IMR-90 (cell line): ENCODE measurements at regions of chr1 and their contacts with region 1.

Region 1: DNA sequence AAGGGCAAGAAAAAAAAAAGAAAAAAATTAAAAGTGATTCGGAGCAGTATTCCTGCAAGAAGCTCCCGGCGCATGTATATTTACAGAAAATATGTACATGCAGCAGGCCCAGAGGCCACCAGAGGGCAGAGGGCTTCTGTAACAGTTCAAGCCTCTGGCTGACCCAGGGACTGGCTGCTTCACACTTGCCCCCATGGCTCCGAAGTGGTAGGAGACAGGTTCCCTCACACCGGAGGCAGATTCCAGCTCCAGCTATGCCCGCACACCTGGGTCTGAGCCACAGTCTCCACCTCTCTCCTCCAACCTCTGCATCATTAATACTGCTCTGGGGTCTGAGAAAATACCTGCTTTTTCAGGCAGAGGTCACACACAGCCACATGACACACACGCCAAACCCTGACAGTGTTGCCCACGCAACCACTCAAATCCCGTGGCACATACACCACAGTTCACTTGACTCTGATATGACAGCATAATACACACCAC is 2.2 kb upstream of the ARHGAP30 start:
- DNase-seq: no peak
- ATAC-seq: peak; percentile 63; the same call in 1 of the 2 replicates
- H3K4me3 ChIP-seq: no peak overlapping the region
- H3K27ac ChIP-seq: no peak overlapping the region
- H3K4me1 ChIP-seq: no peaks in the 10 kb centered on the region
- H3K27me3 ChIP-seq: no peaks in the 10 kb centered on the region; the same call in 1 of the 2 replicates
- CTCF ChIP-seq: peak; percentile 50
- POLR2A ChIP-seq: no peak
- RAD21 ChIP-seq: peak; percentile 62

Region 2: DNA sequence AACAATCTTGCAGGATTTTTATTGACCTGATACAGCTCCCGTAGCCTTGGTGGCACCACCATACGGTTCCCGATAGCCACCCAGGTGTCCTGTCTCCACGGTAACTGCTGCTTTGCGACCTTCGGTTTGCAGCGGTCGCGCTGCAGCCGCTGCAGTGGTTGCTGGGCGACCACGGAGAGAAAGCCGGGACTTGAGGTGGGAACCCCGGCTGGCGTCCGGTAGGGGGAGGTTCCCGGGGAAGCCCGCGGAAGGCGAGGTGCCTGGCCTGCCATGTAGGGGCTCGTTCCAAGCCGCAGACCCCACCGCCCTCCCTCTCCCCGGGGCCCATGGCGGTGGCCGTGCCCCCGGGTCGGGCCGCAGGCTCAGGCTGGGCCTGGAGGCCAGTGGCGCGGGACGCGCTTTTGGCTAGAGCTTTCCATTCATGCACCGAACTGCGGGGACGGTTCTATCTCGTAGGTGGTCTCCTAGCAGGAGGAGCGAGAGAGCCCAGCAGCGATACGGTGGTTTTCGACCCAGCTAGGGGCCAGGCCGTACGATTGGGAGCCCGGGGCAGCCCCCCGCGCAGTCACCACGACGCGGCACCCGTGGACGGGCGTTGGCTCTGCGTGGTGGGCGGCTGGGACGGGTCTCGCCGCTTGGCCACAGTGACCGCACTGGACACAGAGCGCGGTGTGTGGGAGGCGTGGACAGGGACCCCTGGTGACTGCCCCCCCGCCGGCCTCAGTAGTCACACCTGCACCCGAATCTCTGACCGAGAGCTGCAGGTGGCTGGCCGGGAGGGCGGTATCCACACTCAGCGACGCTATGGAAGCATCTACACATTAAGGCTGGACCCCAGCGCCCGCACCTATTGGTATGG is 26.5 kb after region 1 on chr1 and contains the start of gene KLHDC9:
- CTCF ChIA-PET with region 1: interaction called, 7 read pairs
- POLR2A ChIA-PET with region 1: no interaction called
- dilution Hi-C with region 1: no loop called
- in situ Hi-C with region 1: no loop called
- intact Hi-C with region 1: loop called (anchors 2 kb)
- DNase-seq: peak; percentile 54
- ATAC-seq: peak; percentile 73
- H3K4me3 ChIP-seq: peak within 1 kb of the TSS; percentile 43
- H3K27ac ChIP-seq: no peak within 1 kb of the TSS
- H3K4me1 ChIP-seq: peaks cover 5% of the 10 kb centered on the region; the same call in 1 of the 2 replicates
- H3K27me3 ChIP-seq: no peaks in the 10 kb centered on the region
- CTCF ChIP-seq: no peak
- POLR2A ChIP-seq: no peak
- RAD21 ChIP-seq: no peak
- total RNA-seq, gene KLHDC9: 0.18 TPM in 1 of 2 replicates, not detected in the other

Region 3: GRCh38 chr1:161139765-161140164 is 67.8 kb after region 1 on chr1:
- CTCF ChIA-PET with region 1: no interaction called
- POLR2A ChIA-PET with region 1: no interaction called
- dilution Hi-C with region 1: no loop called
- in situ Hi-C with region 1: no loop called
- intact Hi-C with region 1: no loop called
- DNase-seq: peak; percentile 57
- ATAC-seq: peak; percentile 60
- H3K4me3 ChIP-seq: no peak overlapping the region
- H3K27ac ChIP-seq: no peak overlapping the region
- H3K4me1 ChIP-seq: no peaks in the 10 kb centered on the region
- H3K27me3 ChIP-seq: no peaks in the 10 kb centered on the region
- CTCF ChIP-seq: peak; percentile 64
- POLR2A ChIP-seq: no peak
- RAD21 ChIP-seq: peak; percentile 66

Region 4: DNA sequence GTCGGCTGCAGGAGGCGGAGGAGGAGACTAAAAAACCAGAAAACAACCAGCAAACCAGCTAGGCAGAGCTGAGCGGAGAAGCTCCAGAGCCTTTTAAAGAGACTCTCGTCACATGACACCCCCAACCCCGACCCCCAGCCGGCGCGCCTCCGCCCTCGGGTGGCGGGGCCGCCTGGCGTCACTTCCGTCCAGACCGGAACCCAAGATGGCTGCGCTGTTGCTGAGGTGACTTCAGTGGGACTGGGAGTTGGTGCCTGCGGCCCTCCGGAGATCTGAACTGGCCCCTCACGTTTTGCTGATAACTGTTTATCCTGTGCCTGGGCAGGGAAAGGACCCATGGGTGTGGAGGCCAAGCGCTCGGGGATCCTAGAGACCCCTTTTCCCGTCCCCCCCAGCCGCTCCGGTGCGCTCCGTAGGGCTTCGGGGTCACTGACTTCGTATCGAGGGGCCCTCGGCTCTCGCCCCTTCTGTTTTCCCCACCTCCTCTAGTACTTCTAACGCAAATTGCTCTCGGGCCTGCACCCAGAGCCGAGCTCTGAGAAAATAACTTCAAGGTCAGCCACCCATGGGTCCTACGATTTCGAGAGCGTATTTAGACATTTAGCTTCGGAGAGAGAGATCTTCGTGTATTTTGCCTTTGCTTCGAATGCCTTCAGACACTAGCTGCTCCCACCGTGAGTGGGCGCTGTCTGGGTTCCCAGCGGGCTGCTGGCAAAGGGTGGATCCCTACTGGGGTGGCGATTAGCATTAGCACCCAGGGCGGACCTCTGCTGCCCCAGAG is 242.5 kb after region 1 on chr1 and contains the start of gene SDHC:
- CTCF ChIA-PET with region 1: no interaction called
- POLR2A ChIA-PET with region 1: no interaction called
- dilution Hi-C with region 1: no loop called
- in situ Hi-C with region 1: no loop called
- intact Hi-C with region 1: no loop called
- DNase-seq: peak; percentile 85
- ATAC-seq: peak; percentile 96
- H3K4me3 ChIP-seq: peak within 1 kb of the TSS; percentile 71
- H3K27ac ChIP-seq: peak within 1 kb of the TSS; percentile 88
- H3K4me1 ChIP-seq: no peaks in the 10 kb centered on the region
- H3K27me3 ChIP-seq: no peaks in the 10 kb centered on the region; the same call in 1 of the 2 replicates
- CTCF ChIP-seq: peak; percentile 51
- POLR2A ChIP-seq: peak; percentile 97
- RAD21 ChIP-seq: no peak
- total RNA-seq, gene SDHC: 36.1 and 158 TPM in 2 replicates

Region 5: GRCh38 chr1:161676958-161677689 is 605.2 kb after region 1 on chr1:
- CTCF ChIA-PET with region 1: no interaction called
- POLR2A ChIA-PET with region 1: interaction called, 10 read pairs
- dilution Hi-C with region 1: no loop called
- in situ Hi-C with region 1: no loop called
- intact Hi-C with region 1: no loop called
- DNase-seq: no peak
- ATAC-seq: no peak
- H3K4me3 ChIP-seq: no peak overlapping the region
- H3K27ac ChIP-seq: no peak overlapping the region
- H3K4me1 ChIP-seq: no peaks in the 10 kb centered on the region
- H3K27me3 ChIP-seq: peaks cover 5% of the 10 kb centered on the region
- CTCF ChIP-seq: no peak
- POLR2A ChIP-seq: no peak
- RAD21 ChIP-seq: no peak